PC-3 (cell line): ENCODE measurements at regions of chr2 and their contacts with region 1.

Region 1: DNA sequence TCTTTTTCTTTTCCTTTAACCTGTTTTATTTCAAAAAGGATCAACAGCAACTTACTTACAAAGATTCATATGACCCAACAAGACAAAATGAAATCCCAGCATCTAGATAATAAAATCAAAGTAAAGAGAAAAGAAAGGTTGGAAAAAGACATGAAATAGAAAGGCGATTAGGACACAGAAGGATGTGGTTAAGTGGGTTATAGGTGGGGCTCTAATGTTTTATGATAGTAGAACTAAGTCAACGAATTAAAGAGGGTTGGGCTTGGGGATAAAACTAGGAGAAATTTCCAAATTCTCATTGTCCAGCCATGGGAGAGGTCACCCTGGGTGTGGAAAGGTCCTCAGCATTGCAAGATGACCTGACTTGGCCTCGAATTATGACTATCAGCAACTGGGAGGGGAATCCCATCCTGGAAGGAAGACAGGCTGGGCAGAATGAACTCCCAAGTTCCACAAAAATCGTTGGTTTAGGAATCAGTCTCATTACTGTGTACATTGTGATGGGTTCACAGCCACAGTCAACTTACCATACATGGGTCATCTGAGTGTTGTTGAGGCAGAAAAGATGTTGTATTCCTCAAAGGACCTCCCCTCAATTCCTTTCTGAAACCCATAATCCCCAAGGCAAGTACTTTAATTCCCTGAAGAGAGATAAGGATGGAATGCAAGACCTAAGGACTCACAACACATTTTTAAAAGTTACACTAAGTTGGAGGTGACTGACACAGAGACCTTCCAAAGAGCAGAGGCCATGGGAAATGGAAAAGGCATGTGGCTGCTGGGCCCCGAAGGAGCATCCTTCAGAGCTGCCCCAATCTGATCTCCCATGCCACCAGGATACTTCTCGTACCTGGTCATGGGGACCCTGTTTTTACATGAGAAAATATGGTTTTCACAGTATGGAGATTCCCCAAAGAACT is 167.6 kb downstream of the UXS1 start:
- DNase-seq: no peak
- ATAC-seq: no peak
- H3K4me3 ChIP-seq: no peak overlapping the region
- H3K27ac ChIP-seq: no peak overlapping the region
- H3K4me1 ChIP-seq: peaks cover 16% of the 10 kb centered on the region
- H3K27me3 ChIP-seq: no peaks in the 10 kb centered on the region
- CTCF ChIP-seq: no peak

Region 2: GRCh38 chr2:105877945-105878344 is 148.6 kb before region 1 on chr2:
- CTCF ChIA-PET with region 1: no interaction called
- POLR2A ChIA-PET with region 1: no interaction called
- intact Hi-C with region 1: no loop called
- DNase-seq: no peak
- ATAC-seq: no peak
- H3K4me3 ChIP-seq: no peak overlapping the region
- H3K27ac ChIP-seq: no peak overlapping the region
- H3K4me1 ChIP-seq: peaks cover 13% of the 10 kb centered on the region; the same call in 1 of the 2 replicates
- H3K27me3 ChIP-seq: no peaks in the 10 kb centered on the region
- CTCF ChIP-seq: no peak

Region 3: DNA sequence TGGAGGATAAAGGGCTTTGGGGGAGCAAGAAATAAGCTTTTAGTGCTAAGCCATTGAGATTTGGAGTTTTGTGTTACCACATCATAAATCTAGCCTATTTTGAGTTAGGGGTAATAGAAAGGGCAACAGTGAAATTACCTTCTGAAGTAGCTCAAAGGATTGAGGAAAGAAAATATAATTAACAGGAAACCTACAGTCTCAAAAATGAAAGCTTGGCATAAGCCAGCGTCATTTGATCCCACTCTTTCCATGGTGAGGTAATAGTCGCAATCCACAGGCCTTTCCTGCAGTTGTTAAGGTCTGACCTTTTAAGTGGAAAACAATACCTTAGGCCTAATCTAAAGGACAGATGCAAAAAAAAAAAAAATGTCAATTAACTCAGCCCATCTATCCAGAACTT is 15.2 kb before region 1 on chr2:
- CTCF ChIA-PET with region 1: no interaction called
- POLR2A ChIA-PET with region 1: interaction called, 17 read pairs
- intact Hi-C with region 1: no loop called
- DNase-seq: no peak
- ATAC-seq: no peak
- H3K4me3 ChIP-seq: no peak overlapping the region
- H3K27ac ChIP-seq: no peak overlapping the region
- H3K4me1 ChIP-seq: no peaks in the 10 kb centered on the region
- H3K27me3 ChIP-seq: no peaks in the 10 kb centered on the region
- CTCF ChIP-seq: no peak